ENCODE measurements at regions of chr16 and their contacts with region 1.

Region 1: GRCh38 chr16:15822957-15823356 is 33.9 kb downstream of the MYH11 start:
- DNase-seq: no peak
- H3K4me3 ChIP-seq: no peak overlapping the region
- H3K27me3 ChIP-seq: peaks cover 7% of the 10 kb centered on the region
- CTCF ChIP-seq: no peak

Region 2: DNA sequence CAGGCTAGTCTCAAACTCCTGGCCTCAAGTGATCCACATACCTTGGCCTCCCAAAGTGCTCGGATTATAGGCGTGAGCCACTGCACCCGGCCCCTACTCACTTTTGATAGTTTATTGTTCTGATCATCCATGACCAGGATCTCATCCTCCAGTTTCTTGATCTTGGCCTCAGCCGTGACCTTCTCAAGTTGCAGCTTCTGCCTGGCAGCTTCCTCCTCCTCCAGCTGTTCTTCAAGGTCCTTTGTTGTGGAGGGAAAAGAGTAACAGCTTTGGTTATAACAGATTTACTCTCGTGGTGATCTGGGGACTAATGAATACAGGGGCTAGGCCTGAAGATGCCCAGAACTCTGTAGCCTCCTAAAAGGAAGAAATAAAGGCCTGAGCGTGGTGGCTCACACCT is 83.0 kb before region 1 on chr16:
- CTCF ChIA-PET with region 1: no interaction called
- POLR2A ChIA-PET with region 1: no interaction called
- DNase-seq: no peak
- H3K4me3 ChIP-seq: no peak overlapping the region
- H3K27me3 ChIP-seq: peaks cover 1% of the 10 kb centered on the region; the same call in 1 of the 2 replicates
- CTCF ChIP-seq: no peak

Region 3: DNA sequence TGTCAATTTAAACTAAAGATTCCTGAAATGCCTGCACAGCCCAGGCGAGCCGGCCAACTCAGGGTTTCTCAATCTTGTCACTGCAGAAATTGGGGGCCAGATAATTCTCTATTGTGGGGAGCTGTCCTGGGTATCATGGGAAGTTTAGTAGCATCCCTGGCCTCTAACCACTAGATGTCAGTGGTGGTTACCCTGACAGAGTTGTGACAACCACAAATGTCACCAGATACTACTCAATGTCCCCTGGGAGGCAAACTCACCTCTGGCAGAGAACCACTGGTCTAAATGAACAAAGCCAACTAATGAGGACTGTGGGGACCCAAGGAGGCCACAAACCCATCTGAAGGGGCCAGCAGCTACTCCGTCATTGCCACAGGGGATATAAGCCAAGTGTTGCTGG is 57.1 kb before region 1 on chr16:
- CTCF ChIA-PET with region 1: interaction called, 53 read pairs
- POLR2A ChIA-PET with region 1: no interaction called
- DNase-seq: no peak
- H3K4me3 ChIP-seq: no peak overlapping the region
- H3K27me3 ChIP-seq: peaks cover 1% of the 10 kb centered on the region
- CTCF ChIP-seq: peak; percentile 77

Region 4: GRCh38 chr16:15777533-15778203 is 45.3 kb before region 1 on chr16:
- CTCF ChIA-PET with region 1: interaction called, 33 read pairs
- POLR2A ChIA-PET with region 1: no interaction called
- DNase-seq: no peak
- H3K4me3 ChIP-seq: no peak overlapping the region
- H3K27me3 ChIP-seq: peaks cover 2% of the 10 kb centered on the region
- CTCF ChIP-seq: peak; percentile 59

Region 5: GRCh38 chr16:15811481-15812400 is 11.2 kb before region 1 on chr16:
- CTCF ChIA-PET with region 1: interaction called, 76 read pairs
- POLR2A ChIA-PET with region 1: no interaction called
- DNase-seq: peak; percentile 98
- H3K4me3 ChIP-seq: no peak overlapping the region
- H3K27me3 ChIP-seq: peaks cover 15% of the 10 kb centered on the region; the same call in 1 of the 2 replicates
- CTCF ChIP-seq: 0 out of 2 replicates have a peak, but pooled peaks have one; percentile 35

Region 6: DNA sequence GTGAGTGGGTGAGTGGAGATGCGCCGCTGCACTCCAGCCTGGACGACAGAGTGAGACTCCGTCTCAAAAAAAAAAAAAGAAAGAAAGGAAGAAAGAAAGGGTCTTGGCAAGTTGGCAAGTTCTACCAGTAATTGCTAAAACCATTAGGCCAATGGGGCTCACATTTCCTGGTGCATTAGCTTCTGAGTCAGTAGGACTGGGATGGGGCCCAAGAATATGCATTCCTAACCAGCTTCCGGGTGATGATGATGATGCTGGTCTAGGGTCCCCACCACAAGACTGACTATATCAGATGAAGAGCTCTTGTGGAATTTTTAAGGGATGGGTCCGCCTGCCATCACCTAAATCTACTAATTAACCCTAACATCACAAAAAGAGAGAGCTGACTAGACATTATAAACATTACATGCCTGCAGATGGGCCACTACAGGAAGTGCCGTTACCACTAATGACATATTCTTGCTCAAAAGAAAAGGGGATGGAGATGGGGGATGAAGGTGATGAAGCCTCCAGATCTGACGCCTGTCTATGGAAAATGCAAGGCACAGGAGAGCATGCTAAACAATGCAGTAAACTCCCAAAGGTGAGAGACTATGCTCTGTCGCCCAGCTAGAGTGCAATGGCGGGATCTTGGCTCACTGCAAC is 20.8 kb after region 1 on chr16:
- CTCF ChIA-PET with region 1: interaction called, 15 read pairs
- POLR2A ChIA-PET with region 1: no interaction called
- DNase-seq: no peak
- H3K4me3 ChIP-seq: no peak overlapping the region
- H3K27me3 ChIP-seq: peaks cover 8% of the 10 kb centered on the region
- CTCF ChIP-seq: no peak

Region 7: GRCh38 chr16:16042076-16042475 is 219.1 kb after region 1 on chr16:
- CTCF ChIA-PET with region 1: no interaction called
- POLR2A ChIA-PET with region 1: no interaction called
- DNase-seq: peak; percentile 46
- H3K4me3 ChIP-seq: no peak overlapping the region
- H3K27me3 ChIP-seq: no peaks in the 10 kb centered on the region
- CTCF ChIP-seq: no peak

Measured in BJ (cell line).